WTC11 (cell line): ENCODE measurements at regions of chr20 and their contacts with region 1.

Region 1: DNA sequence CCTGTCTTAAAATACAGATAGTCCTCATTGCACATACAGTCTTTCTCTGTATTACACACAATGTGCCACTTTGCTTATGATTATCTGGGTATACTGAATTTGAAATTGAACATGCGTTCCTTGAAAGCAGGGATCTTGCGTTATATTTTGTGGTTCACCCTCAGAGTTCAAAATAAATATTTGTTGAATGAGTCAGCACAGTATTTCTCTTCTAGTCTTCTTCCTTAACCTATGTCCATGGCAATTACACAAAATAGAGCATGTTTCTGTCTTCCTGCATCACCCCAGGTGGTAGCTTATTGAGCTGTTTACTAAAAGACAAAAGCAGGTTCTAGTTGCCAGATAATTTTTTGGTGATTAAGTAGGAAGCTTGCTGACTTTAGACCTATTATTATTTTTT is 272.9 kb upstream of the FERMT1 start:
- DNase-seq: no peak
- ATAC-seq: no peak
- H3K4me3 Mint-ChIP-seq: no peak overlapping the region
- H3K27ac Mint-ChIP-seq: no peak overlapping the region
- H3K4me1 Mint-ChIP-seq: peaks cover 37% of the 10 kb centered on the region
- H3K27me3 Mint-ChIP-seq: no peaks in the 10 kb centered on the region
- CTCF ChIP-seq: no peak

Region 2: DNA sequence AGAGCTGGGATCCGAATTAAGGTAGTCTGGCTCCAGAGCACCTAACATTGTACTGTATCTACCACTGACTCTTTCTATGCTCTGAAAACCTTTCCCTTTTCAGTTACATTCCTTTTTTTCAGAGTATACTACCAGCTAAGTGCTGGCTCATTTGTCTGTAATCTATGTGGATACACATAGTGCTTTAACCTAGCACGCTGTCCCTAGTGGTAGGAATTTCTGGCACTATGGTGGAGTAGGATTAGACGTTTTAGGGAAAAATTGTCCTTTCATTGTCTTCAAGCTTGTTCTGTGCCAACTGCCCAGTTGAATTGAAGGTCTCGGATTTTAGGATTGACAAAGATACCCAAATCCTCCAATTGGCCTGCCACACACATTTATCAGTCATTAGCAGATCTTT is 13.8 kb before region 1 on chr20:
- CTCF ChIA-PET with region 1: interaction called, 30 read pairs
- POLR2A ChIA-PET with region 1: no interaction called
- DNase-seq: no peak
- ATAC-seq: peak; percentile 99
- H3K4me3 Mint-ChIP-seq: no peak overlapping the region
- H3K27ac Mint-ChIP-seq: peak overlapping the region; percentile 39; the same call in 1 of the 2 replicates
- H3K4me1 Mint-ChIP-seq: peaks cover 6% of the 10 kb centered on the region
- H3K27me3 Mint-ChIP-seq: no peaks in the 10 kb centered on the region
- CTCF ChIP-seq: peak; percentile 48